ENCODE measurements at regions of chr5 and their contacts with region 1.

Region 1: DNA sequence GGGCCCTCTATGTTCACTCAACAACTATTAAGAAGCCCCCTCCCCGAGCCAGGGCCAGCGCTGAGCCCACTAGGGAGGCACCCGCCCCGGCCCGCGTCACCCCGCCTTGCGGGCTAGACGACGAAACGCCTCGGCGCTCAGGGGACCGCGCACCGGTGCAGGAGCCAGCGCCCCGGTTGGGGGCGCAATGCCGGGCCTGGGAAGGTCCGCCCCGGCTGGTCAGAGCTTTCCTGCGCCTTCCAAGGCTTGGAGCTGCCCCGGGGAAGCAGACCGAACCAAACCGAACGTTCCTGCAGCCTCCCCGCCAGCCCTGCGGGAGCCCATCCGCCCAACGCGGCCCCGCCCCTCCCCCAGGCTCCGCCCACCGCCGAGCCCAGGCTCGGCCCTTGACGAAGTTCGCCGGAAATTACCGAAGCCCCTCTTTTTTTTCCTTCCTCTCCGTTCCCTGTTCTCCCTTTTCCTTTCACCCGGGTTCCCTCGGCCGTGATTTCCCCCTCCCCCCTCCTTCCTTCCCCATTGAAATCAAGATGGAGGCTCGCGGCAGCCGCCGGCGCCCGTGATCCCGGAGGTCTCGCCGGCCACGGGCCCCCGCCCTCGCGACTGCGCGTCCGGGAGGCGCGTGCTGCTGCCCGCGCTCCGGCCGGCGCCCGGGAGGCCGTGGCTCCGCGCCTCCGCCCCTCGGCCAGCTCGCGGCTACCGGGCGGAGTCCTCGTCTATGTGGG is at the start of gene TRIO:
- DNase-seq: peak; percentile 96
- total RNA-seq, gene TRIO: 89.8 TPM

Region 2: GRCh38 chr5:14035859-14036440 is 107.0 kb before region 1 on chr5:
- intact Hi-C with region 1: no loop called
- DNase-seq: no peak

Region 3: GRCh38 chr5:14108170-14108996 is 34.6 kb before region 1 on chr5:
- intact Hi-C with region 1: loop called (anchors 5 kb)
- DNase-seq: no peak

Region 4: GRCh38 chr5:14153932-14154731 is 11.1 kb after region 1 on chr5:
- intact Hi-C with region 1: loop called (anchors 1 kb)
- DNase-seq: peak; percentile 89

Region 5: GRCh38 chr5:14185326-14186058 is 42.5 kb after region 1 on chr5:
- intact Hi-C with region 1: loop called (anchors 5 kb)
- DNase-seq: no peak

Measured in cardiac septum (tissue), 1 donor.